Endothelial cell of umbilical vein (primary cell): ENCODE measurements at regions of chr14 and their contacts with region 1.

Region 1: DNA sequence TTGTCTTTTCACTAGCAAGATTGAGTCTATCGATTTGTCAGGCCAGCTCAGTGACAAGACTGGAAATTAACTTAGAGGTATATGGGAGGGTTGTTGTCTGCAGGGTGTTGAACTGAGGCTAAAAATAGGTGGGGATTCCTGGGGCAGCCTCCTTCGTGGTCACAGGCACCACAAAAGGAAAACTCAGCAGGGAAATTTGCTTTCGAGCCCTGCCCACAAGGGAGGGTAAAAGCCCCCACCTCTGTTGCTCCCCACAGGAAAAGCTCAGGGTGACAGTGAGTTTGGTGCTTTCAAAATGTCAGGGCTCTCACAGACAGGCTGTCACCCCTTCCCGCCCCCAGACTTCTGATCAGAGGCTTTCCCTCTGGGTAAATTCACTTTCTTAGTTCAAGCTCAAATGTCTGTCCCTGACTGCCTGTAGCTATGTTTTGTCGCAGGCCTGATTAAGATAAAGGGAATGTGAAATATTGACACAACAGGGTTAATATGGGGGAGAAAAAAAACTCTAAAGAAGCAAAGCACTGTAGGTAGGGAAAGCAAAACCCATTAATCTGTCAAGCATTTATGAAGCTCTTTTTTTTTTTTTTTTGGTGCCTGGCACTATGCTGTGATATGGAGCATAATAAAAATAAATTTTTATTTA is 11.7 kb upstream of the NFKBIA start:
- DNase-seq: no peak
- H3K4me3 ChIP-seq: no peak overlapping the region
- H3K27ac ChIP-seq: no peak overlapping the region
- H3K4me1 ChIP-seq: peaks cover 39% of the 10 kb centered on the region
- H3K27me3 ChIP-seq: no peaks in the 10 kb centered on the region
- CTCF ChIP-seq: no peak
- POLR2A ChIP-seq: no peak

Region 2: DNA sequence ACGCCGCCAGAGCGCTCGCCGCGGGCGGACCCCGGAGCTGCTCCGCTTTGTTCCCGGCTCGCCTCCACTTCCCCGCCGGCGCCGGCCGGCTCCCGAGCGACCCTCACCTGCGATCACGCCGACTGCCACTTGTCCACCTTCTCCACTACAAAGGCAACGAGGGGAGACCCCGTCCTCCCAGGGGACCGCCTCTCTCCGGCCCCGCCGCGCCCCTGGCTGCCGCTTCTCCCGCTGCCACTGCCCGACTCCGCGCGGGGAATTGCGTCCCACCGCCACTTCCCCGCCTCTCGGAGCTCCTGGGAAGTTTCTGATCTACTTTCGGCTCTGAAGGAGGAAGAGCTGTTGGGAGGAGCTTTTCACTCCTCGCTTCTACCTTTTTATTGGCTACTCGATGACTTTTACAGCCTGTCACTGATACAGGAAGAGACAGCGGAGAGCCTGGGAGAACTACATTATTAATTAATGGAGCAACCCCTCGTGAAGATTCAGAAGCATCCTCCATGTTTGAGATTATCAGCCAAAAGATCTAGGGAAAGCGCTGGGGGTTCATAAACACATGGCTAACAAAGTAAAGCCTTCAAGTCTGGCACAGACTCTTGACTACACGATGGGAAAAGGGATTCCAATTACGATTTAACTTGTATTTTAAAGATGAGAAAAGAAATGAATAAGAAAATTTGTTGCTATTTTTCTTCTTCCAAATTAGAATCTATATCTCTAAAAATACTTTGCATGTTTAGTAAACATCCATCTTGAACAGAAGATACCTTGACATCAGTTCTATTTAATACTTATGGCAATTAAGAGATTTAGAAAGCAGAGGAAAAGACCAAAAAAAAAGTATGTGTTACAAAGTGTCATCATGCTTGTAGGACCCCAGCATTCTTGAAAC is 541.0 kb before region 1 on chr14 and contains the start of gene BAZ1A:
- CTCF ChIA-PET with region 1: no interaction called
- POLR2A ChIA-PET with region 1: no interaction called
- dilution Hi-C with region 1: no loop called
- intact Hi-C with region 1: loop called (anchors 5 kb)
- DNase-seq: peak; percentile 90
- H3K4me3 ChIP-seq: peak within 1 kb of the TSS; percentile 78 to 85 (median 80)
- H3K27ac ChIP-seq: peak within 1 kb of the TSS; percentile 84
- H3K4me1 ChIP-seq: peaks cover 14% of the 10 kb centered on the region
- H3K27me3 ChIP-seq: no peaks in the 10 kb centered on the region
- CTCF ChIP-seq: no peak
- POLR2A ChIP-seq: peak; percentile 95
- total RNA-seq, gene BAZ1A: 49.1 and 52.1 TPM in 2 replicates

Region 3: DNA sequence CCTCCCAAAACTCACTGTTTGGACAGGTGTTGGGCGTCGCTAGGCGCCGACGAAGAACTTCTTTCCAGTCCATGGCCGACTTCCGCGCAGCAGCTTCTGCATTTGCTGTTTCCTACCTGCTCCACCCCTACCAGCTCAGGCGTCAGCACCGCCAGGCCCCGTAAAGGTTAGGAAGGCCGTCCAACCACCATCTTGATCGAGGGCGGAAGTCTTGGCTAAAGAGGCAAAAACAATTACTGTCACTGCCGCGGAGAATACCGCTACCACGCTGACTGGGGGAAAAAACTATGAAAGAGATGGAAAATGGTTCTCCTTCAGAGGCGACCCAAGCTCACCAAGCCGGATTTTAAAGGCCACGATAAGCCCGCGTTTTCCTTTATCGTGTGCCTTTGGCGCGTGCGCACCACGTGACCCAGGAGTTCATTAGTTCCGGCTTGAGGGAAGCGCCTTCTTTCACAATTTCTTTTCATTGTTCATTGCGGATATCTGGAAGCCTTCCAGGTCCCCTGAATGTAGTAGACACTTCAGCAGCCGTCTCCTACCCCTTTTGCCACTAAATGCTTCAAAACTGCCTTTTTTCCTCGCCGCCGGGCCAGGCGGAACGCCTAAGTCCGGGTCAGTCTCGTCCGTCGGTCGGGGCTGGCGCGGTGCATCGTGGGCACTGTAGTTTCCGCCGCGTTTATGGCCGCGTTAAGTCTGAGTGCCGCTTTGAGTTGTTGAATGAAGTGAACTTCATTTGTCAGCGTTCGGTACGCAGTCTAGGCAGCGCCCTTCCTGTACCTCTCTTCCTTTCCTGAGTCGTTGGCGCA is 294.1 kb before region 1 on chr14 and contains the starts of genes PPP2R3C and PRORP:
- CTCF ChIA-PET with region 1: no interaction called
- POLR2A ChIA-PET with region 1: no interaction called
- dilution Hi-C with region 1: no loop called
- intact Hi-C with region 1: loop called (anchors 1 kb)
- DNase-seq: peak; percentile 95
- H3K4me3 ChIP-seq: peak within 1 kb of the TSS; percentile 81 to 96 (median 88)
- H3K27ac ChIP-seq: peak within 1 kb of the TSS; percentile 91
- H3K4me1 ChIP-seq: peaks cover 15% of the 10 kb centered on the region
- H3K27me3 ChIP-seq: no peaks in the 10 kb centered on the region
- CTCF ChIP-seq: no peak
- POLR2A ChIP-seq: no peak
- total RNA-seq, gene PPP2R3C: 40.6 and 46.0 TPM in 2 replicates
- total RNA-seq, gene PRORP: 36.3 and 36.9 TPM in 2 replicates

Region 4: GRCh38 chr14:35215110-35215876 is 200.9 kb before region 1 on chr14:
- CTCF ChIA-PET with region 1: interaction called, 43 read pairs
- POLR2A ChIA-PET with region 1: no interaction called
- dilution Hi-C with region 1: no loop called
- intact Hi-C with region 1: loop called (anchors 1 kb)
- DNase-seq: peak; percentile 62
- H3K4me3 ChIP-seq: no peak overlapping the region
- H3K27ac ChIP-seq: peak overlapping the region; percentile 41
- H3K4me1 ChIP-seq: peaks cover 20% of the 10 kb centered on the region
- H3K27me3 ChIP-seq: no peaks in the 10 kb centered on the region
- CTCF ChIP-seq: no peak
- POLR2A ChIP-seq: no peak

Region 5: DNA sequence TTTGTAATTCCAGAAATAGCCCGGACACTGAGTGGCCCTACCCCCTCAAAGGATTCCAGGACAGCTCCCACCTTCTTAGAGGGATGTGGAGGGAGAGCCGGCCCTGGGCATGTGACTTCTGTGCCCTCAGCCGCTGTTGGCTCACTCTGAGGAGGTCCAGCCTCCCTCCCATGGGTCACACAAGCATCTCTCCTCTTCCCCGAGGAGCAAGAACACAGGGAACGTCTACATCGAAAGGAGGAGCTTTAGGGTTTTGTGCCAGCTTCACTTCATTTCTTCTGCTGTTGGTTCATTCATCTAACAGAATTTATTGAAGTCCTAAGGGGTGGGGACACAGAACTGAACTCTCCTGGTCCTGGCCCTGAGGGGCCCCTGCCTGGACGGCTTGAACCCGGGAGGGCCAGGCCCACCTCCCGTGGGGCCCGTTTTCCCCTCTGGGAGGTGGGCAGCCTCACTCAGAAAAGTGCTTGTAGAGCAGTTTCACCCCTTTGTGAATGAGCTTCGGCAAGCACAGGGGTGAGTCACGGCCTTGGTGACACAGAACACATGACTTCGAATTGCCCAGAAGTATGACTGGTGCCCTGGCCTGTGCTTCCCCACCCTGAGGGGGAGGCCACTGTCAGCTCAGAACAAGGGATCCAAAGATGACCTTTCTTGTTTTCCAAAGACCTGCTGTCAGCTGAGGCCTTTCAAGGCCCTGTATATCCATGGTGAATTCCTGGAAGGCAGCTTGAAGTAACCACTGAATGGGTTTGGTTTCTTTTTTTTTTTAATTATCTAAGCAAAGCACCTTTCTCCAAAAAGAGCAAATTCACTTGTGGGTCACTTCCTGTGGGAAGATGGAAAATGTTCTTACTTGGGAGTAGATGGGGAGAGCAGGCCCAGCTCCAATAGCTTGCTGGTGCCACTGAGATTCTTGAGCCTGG is 50.8 kb before region 1 on chr14:
- CTCF ChIA-PET with region 1: no interaction called
- POLR2A ChIA-PET with region 1: no interaction called
- dilution Hi-C with region 1: no loop called
- intact Hi-C with region 1: no loop called
- DNase-seq: peak; percentile 84
- H3K4me3 ChIP-seq: no peak overlapping the region
- H3K27ac ChIP-seq: peak overlapping the region; percentile 31
- H3K4me1 ChIP-seq: peaks cover 27% of the 10 kb centered on the region
- H3K27me3 ChIP-seq: no peaks in the 10 kb centered on the region
- CTCF ChIP-seq: no peak
- POLR2A ChIP-seq: no peak

Region 6: DNA sequence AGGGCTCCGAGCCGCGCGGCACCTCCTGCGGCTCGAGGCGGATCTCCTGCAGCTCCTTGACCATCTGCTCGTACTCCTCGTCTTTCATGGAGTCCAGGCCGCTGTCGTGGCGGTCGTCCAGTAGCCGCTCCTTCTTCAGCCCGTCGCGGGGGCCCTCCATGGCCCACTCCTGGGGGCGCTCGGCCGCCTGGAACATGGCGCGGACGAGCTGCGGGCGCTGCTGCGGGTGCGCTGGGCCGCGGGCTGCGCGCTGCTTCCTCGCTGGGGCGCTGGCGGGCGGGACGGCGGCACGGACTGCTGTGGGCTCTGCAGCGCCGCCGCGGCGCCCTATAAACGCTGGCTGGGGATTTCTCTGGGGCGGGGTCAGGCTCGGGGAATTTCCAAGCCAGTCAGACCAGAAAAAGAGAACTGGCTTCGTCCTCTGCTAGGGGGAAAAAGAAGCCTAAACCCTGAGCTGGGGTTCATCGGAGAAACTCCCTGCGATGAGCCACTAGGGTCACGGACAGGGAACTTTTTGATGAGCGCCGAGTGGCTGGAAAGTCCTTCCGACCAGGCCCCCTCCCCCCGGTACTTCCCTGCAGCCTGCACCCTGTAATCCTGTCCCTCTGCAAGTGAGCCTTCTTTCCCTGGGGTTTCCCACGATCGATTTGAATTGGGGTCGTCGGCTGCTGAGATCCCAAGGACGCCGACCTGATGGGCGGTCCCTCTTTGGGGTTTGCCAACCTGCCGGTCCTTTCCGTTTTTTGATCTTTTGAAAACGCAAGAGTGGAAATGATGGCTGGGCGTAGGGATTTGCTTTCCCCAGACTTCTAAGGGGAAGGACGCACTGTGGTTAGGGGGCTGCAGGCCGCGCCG is 11.6 kb before region 1 on chr14 and contains the start of gene NFKBIA:
- CTCF ChIA-PET with region 1: interaction called, 22 read pairs
- POLR2A ChIA-PET with region 1: interaction called, 10 read pairs
- dilution Hi-C with region 1: no loop called
- intact Hi-C with region 1: loop called (anchors 1 kb)
- DNase-seq: peak; percentile 90
- H3K4me3 ChIP-seq: peak within 1 kb of the TSS; percentile 74 to 89 (median 76)
- H3K27ac ChIP-seq: peak within 1 kb of the TSS; percentile 97
- H3K4me1 ChIP-seq: peaks cover 45% of the 10 kb centered on the region
- H3K27me3 ChIP-seq: no peaks in the 10 kb centered on the region
- CTCF ChIP-seq: peak; percentile 18 to 28
- POLR2A ChIP-seq: peak; percentile 90
- total RNA-seq, gene NFKBIA: 52.5 and 55.7 TPM in 2 replicates

Region 7: GRCh38 chr14:35506927-35507326 is 90.7 kb after region 1 on chr14:
- CTCF ChIA-PET with region 1: no interaction called
- POLR2A ChIA-PET with region 1: no interaction called
- dilution Hi-C with region 1: no loop called
- intact Hi-C with region 1: no loop called
- DNase-seq: peak; percentile 67
- H3K4me3 ChIP-seq: no peak overlapping the region
- H3K27ac ChIP-seq: peak overlapping the region; percentile 86
- H3K4me1 ChIP-seq: peaks cover 16% of the 10 kb centered on the region
- H3K27me3 ChIP-seq: no peaks in the 10 kb centered on the region
- CTCF ChIP-seq: no peak
- POLR2A ChIP-seq: no peak